WTC11 (cell line): ENCODE measurements at regions of chr5 and their contacts with region 1.

Region 1: DNA sequence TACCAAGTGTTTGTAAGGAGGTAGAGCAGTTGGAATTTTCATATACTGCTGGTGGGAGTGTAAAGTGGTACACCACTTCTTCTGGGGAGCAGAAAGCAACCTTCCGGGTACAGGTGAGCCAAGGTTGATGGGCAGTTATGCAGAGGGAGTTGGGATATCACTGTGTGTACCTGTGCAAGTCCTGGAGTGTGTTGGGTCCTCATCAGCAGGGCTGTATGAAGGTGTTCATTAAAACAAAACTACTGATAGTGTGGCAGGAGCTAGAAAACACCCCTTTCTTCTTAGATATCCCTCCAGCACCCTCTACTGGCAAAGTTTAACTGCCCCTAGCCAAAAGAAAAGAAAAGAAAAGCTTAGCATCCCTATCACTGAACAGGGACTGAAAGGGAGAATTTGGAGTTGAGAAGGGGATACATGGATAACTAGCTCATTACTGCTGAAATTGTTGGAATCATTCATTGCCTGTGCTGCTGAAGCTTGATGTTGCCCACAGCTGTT is 10.7 kb downstream of the MARCHF6 start:
- DNase-seq: no peak
- ATAC-seq: peak; percentile 41
- H3K4me3 Mint-ChIP-seq: no peak overlapping the region
- H3K27ac Mint-ChIP-seq: no peak overlapping the region
- H3K4me1 Mint-ChIP-seq: peaks cover 10% of the 10 kb centered on the region; the same call in 1 of the 2 replicates
- H3K27me3 Mint-ChIP-seq: no peaks in the 10 kb centered on the region
- CTCF ChIP-seq: no peak; the same call in 1 of the 2 replicates

Region 2: DNA sequence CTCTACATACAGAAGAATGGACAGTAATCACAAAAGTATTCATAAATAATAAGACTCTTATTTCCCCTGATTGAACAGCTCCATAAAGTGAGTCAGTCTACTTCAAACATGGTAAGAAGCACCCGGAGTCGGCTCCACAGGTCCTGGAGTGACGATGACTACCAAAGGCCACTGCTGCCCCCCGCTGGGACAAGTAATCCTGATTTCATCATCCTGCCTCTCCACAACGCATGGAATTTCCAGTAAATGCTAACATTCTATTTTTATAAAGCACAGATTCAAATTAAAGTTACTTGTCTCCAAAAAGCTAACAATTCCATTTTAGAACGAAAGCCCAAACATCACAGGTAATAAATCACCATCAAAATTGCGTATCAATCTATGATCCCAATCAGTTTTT is 130.7 kb before region 1 on chr5:
- CTCF ChIA-PET with region 1: no interaction called
- POLR2A ChIA-PET with region 1: no interaction called
- DNase-seq: peak; percentile 64
- ATAC-seq: peak; percentile 55
- H3K4me3 Mint-ChIP-seq: no peak overlapping the region
- H3K27ac Mint-ChIP-seq: peak overlapping the region; percentile 26; the same call in 1 of the 2 replicates
- H3K4me1 Mint-ChIP-seq: peaks cover 6% of the 10 kb centered on the region; the same call in 1 of the 2 replicates
- H3K27me3 Mint-ChIP-seq: no peaks in the 10 kb centered on the region
- CTCF ChIP-seq: no peak

Region 3: GRCh38 chr5:10424124-10424731 is 60.0 kb after region 1 on chr5:
- CTCF ChIA-PET with region 1: interaction called, 15 read pairs
- POLR2A ChIA-PET with region 1: no interaction called
- DNase-seq: peak; percentile 34
- ATAC-seq: peak; percentile 90
- H3K4me3 Mint-ChIP-seq: no peak overlapping the region
- H3K27ac Mint-ChIP-seq: no peak overlapping the region
- H3K4me1 Mint-ChIP-seq: peaks cover 21% of the 10 kb centered on the region
- H3K27me3 Mint-ChIP-seq: no peaks in the 10 kb centered on the region
- CTCF ChIP-seq: no peak